H1 (cell line): ENCODE measurements at regions of chr6 and their contacts with region 1.

Region 1: GRCh38 chr6:47097092-47097945 is 55.2 kb upstream of the ADGRF1 start:
- DNase-seq: peak in 1 of 2 experiments; percentile 53
- H3K4me3 ChIP-seq: no peak overlapping the region
- H3K27ac ChIP-seq: no peak overlapping the region
- H3K4me1 ChIP-seq: peaks cover 0 to 7% (median 0%) of the 10 kb centered on the region in 4 experiments; a peak in 2 of 7 replicates
- H3K27me3 ChIP-seq: peaks cover 0 to 1% (median 0%) of the 10 kb centered on the region in 4 experiments; a peak in 1 of 7 replicates
- CTCF ChIP-seq: peak; percentile 37 to 81 (median 77)
- EP300 ChIP-seq: no peak
- POLR2A ChIP-seq: no peak
- RAD21 ChIP-seq: peak; percentile 94 to 96

Region 2: GRCh38 chr6:46963626-46964025 is 133.7 kb before region 1 on chr6:
- CTCF ChIA-PET with region 1: no interaction called
- POLR2A ChIA-PET with region 1: no interaction called
- DNase-seq: no peak
- H3K4me3 ChIP-seq: no peak overlapping the region
- H3K27ac ChIP-seq: no peak overlapping the region
- H3K4me1 ChIP-seq: 0 out of 7 replicates have a peak, but pooled peaks cover 0 to 3% (median 0%) of the 10 kb centered on the region in 4 experiments
- H3K27me3 ChIP-seq: no peaks in the 10 kb centered on the region
- CTCF ChIP-seq: no peak
- EP300 ChIP-seq: no peak
- POLR2A ChIP-seq: no peak
- RAD21 ChIP-seq: no peak

Region 3: DNA sequence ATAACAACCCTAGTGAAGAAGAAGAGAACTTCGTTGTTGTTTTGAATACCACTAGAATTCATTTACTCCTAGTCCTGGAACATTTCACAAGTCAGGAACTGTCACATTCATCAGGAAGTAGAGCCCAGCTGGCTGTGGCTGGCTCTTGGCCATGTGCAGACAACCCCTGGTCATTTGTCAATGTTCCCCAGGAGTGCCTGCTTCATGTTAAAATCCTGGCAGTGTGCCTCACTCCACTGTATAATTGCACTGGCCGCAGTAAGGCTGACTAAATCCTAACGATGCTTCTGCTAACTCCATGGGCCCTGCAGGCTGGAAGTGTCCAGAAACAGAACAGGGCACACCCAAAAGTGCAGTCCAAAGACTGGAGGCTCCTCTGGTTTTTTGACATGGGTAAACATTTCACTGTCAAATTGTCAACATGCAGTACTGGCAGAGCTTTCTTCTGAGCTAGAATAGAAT is 13.7 kb before region 1 on chr6:
- CTCF ChIA-PET with region 1: interaction called, 14 read pairs
- POLR2A ChIA-PET with region 1: no interaction called
- DNase-seq: no peak
- H3K4me3 ChIP-seq: no peak overlapping the region
- H3K27ac ChIP-seq: no peak overlapping the region
- H3K4me1 ChIP-seq: peaks cover 0 to 2% (median 0%) of the 10 kb centered on the region in 4 experiments; a peak in 1 of 7 replicates
- H3K27me3 ChIP-seq: no peaks in the 10 kb centered on the region
- CTCF ChIP-seq: no peak
- EP300 ChIP-seq: no peak
- POLR2A ChIP-seq: no peak
- RAD21 ChIP-seq: no peak

Region 4: DNA sequence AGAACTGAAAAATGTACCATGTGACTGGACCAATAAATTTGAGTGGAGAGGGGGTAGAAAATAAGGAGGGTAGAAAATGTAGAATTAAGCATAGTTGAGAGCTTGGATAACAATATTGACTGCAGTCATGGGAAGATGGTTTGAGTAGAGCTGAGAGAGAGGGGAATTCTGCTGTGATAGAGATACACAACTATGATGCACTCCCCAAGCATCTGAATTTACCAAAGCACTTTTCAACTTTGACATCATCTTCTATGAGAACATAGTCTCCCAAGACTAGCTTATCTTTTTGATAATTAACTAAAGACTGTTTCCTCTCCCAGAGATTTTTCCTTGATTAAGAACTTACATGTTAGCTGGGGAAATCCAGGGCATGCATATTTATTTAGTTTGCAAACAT is 109.3 kb after region 1 on chr6:
- CTCF ChIA-PET with region 1: interaction called, 16 read pairs
- POLR2A ChIA-PET with region 1: no interaction called
- DNase-seq: no peak
- H3K4me3 ChIP-seq: no peak overlapping the region
- H3K27ac ChIP-seq: no peak overlapping the region
- H3K4me1 ChIP-seq: no peaks in the 10 kb centered on the region
- H3K27me3 ChIP-seq: no peaks in the 10 kb centered on the region
- CTCF ChIP-seq: no peak
- EP300 ChIP-seq: no peak
- POLR2A ChIP-seq: no peak
- RAD21 ChIP-seq: no peak

Region 5: GRCh38 chr6:47309291-47310130 is 212.2 kb after region 1 on chr6 and contains the start of gene TNFRSF21:
- CTCF ChIA-PET with region 1: interaction called, 27 read pairs
- POLR2A ChIA-PET with region 1: interaction called, 5 read pairs
- DNase-seq: peak; percentile 81 to 96
- H3K4me3 ChIP-seq: peak within 1 kb of the TSS; percentile 79 to 93 (median 88)
- H3K27ac ChIP-seq: peak within 1 kb of the TSS; percentile 85; the same call in 1 of the 2 replicates
- H3K4me1 ChIP-seq: peaks cover 0 to 17% (median 5%) of the 10 kb centered on the region in 4 experiments; a peak in 5 of 7 replicates
- H3K27me3 ChIP-seq: no peaks in the 10 kb centered on the region
- CTCF ChIP-seq: peak; percentile 75 to 90 (median 86)
- EP300 ChIP-seq: peak in 1 of 2 experiments; percentile 15; a peak in 1 of 3 replicates
- POLR2A ChIP-seq: peak; percentile 87 to 97
- RAD21 ChIP-seq: peak; percentile 91 to 93
- total RNA-seq, gene TNFRSF21: 52.4 and 52.7 TPM in 2 replicates